Endothelial cell of umbilical vein (primary cell): ENCODE measurements at regions of chr5 and their contacts with region 1.

Region 1: GRCh38 chr5:34915139-34915855 is at the starts of genes BRIX1 and RAD1:
- DNase-seq: peak; percentile 98
- H3K4me3 ChIP-seq: peak within 1 kb of the TSS; percentile 77 to 97 (median 87)
- H3K27ac ChIP-seq: peak within 1 kb of the TSS; percentile 64
- H3K4me1 ChIP-seq: peaks cover 28% of the 10 kb centered on the region
- H3K27me3 ChIP-seq: no peaks in the 10 kb centered on the region
- CTCF ChIP-seq: no peak
- POLR2A ChIP-seq: peak; percentile 78
- total RNA-seq, gene BRIX1: 28.4 and 32.2 TPM in 2 replicates
- total RNA-seq, gene RAD1: 22.2 and 25.0 TPM in 2 replicates

Region 2: DNA sequence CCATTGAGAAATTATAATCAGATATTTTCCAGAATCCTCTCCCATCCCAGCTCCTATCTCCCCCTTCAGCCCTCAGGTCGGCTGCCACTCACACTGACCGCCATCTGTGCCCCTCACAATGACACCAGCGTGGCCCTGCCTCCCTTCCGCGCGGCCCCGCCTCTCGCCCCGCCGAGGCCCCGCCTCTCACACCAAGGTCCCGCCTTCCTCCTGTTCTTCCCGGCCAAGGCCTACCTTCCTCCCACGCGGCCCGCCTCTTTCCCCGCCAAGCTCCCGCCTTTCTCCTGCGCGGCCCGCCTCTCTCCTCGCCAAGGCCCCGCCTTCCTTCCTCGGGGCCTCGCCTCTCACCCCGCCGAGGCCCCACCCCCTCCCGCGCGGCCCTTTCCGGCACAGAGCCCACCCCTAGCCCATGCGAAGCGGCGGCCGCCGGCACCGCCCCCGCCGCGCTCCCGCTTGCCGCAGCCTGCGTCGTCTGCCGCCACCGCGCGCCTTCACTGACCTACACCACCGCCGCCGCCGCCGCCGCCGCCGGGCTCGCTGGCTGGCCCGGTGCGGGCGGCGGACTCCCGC is 13.9 kb after region 1 on chr5 and contains the start of gene DNAJC21:
- CTCF ChIA-PET with region 1: interaction called, 14 read pairs
- POLR2A ChIA-PET with region 1: interaction called, 12 read pairs
- dilution Hi-C with region 1: no loop called
- intact Hi-C with region 1: loop called (anchors 1 kb)
- DNase-seq: peak; percentile 98
- H3K4me3 ChIP-seq: peak within 1 kb of the TSS; percentile 50 to 98 (median 97)
- H3K27ac ChIP-seq: peak within 1 kb of the TSS; percentile 39
- H3K4me1 ChIP-seq: peaks cover 20% of the 10 kb centered on the region
- H3K27me3 ChIP-seq: no peaks in the 10 kb centered on the region
- CTCF ChIP-seq: no peak
- POLR2A ChIP-seq: no peak
- total RNA-seq, gene DNAJC21: 39.4 and 49.2 TPM in 2 replicates